ENCODE measurements at regions of chr11 and their contacts with region 1.

Region 1: DNA sequence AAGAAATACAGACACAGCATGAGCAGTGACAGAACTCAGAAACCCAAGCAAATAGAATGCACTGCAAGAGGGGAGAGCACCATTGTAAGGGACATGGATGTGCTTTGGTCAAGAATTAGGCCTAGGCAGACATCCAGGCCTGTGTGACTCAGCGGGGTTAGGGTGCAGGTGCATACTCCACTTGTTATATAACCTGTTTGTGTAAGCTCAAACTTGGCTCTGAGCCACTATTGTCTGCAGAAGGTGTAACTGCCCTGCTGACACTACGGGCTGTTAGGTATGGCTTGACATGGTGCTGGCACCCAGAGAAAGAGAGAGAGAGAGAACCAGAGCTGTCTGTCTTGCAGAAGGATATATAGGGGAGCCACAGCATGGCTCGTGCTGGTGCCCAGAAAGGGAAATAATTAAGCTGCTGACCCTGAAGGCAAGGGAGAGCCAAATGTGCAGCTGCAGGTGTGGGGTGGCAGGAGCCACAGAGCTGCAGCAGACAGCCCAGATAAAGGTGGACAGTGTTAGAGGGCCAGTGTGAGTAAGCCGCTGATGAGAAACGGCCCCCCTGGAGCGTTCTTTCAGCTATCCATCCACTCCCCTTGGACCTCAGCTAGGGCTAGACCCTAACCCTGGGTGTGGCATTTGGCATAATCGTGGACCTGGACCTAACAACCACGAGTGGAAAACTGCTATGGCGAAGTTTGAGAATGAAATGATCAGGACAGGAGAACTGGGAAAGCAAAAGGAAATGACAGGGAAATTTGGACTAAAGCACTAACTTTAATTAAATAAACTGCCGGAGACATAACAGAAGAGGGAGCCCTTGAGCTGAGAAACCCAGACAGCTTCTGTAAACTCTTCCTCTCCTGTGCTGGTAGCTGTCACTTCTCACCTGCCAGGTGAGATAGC is 253.0 kb upstream of the CCDC179 start:
- DNase-seq: peak; percentile 85
- ATAC-seq: peak; percentile 89
- H3K4me3 ChIP-seq: peak overlapping the region; percentile 51; the same call in 1 of the 2 replicates
- H3K27ac ChIP-seq: peak overlapping the region; percentile 34
- H3K4me1 ChIP-seq: peaks cover 13% of the 10 kb centered on the region; the same call in 1 of the 2 replicates
- H3K27me3 ChIP-seq: no peaks in the 10 kb centered on the region
- CTCF ChIP-seq: peak; percentile 77

Region 2: GRCh38 chr11:22920939-22921565 is 192.2 kb before region 1 on chr11:
- CTCF ChIA-PET with region 1: no interaction called
- POLR2A ChIA-PET with region 1: no interaction called
- intact Hi-C with region 1: loop called (anchors 5 kb)
- DNase-seq: peak; percentile 64
- ATAC-seq: peak; percentile 77
- H3K4me3 ChIP-seq: no peak overlapping the region
- H3K27ac ChIP-seq: no peak overlapping the region
- H3K4me1 ChIP-seq: no peaks in the 10 kb centered on the region
- H3K27me3 ChIP-seq: no peaks in the 10 kb centered on the region
- CTCF ChIP-seq: peak; percentile 76

Region 3: GRCh38 chr11:23288003-23288783 is 175.0 kb after region 1 on chr11:
- CTCF ChIA-PET with region 1: no interaction called
- POLR2A ChIA-PET with region 1: no interaction called
- intact Hi-C with region 1: loop called (anchors 1 kb)
- DNase-seq: peak; percentile 81
- ATAC-seq: peak; percentile 83
- H3K4me3 ChIP-seq: no peak overlapping the region
- H3K27ac ChIP-seq: peak overlapping the region; percentile 88
- H3K4me1 ChIP-seq: peaks cover 16% of the 10 kb centered on the region
- H3K27me3 ChIP-seq: no peaks in the 10 kb centered on the region
- CTCF ChIP-seq: no peak

Region 4: GRCh38 chr11:23540101-23540561 is 426.9 kb after region 1 on chr11:
- CTCF ChIA-PET with region 1: interaction called, 3 read pairs
- POLR2A ChIA-PET with region 1: no interaction called
- intact Hi-C with region 1: loop called (anchors 1 kb)
- DNase-seq: peak; percentile 79
- ATAC-seq: peak; percentile 86
- H3K4me3 ChIP-seq: peak overlapping the region; percentile 9; the same call in 1 of the 2 replicates
- H3K27ac ChIP-seq: no peak overlapping the region
- H3K4me1 ChIP-seq: peaks cover 13% of the 10 kb centered on the region
- H3K27me3 ChIP-seq: no peaks in the 10 kb centered on the region
- CTCF ChIP-seq: peak; percentile 67

Region 5: DNA sequence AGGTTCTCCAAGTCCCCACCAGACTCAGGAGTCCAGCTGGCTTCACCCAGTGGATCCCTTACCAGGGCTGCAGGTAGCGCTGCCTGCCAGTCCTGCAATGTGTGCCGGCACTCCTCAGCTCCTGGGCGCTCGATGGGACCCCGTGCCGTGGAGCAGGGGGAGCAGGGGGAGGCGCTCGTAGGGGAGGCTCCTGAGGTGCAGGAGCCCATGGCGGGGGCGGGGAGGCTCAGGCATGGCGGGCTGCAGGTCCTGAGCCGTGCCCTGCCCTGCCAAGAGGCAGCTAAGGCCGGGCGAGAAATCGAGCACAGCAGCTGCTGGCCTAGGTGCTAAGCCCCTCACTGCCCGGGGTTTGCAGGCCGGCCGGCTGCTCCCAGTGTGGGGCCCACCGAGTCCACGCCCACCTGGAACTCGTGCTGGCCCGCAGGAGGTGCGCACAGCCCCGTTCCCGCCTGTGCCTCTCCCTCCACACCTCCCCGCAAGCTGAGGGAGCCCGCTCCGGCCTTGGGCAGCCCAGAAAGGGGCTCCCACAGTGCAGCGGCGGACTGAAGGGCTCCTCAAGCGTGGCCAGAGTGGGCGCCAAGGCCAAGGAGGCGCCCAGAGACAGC is 539.9 kb after region 1 on chr11:
- CTCF ChIA-PET with region 1: no interaction called
- POLR2A ChIA-PET with region 1: no interaction called
- intact Hi-C with region 1: loop called (anchors 10 kb)
- DNase-seq: no peak
- ATAC-seq: no peak
- H3K4me3 ChIP-seq: no peak overlapping the region
- H3K27ac ChIP-seq: no peak overlapping the region
- H3K4me1 ChIP-seq: no peaks in the 10 kb centered on the region
- H3K27me3 ChIP-seq: no peaks in the 10 kb centered on the region
- CTCF ChIP-seq: no peak

Region 6: GRCh38 chr11:24324211-24324610 is 1211.0 kb after region 1 on chr11:
- CTCF ChIA-PET with region 1: no interaction called
- POLR2A ChIA-PET with region 1: no interaction called
- intact Hi-C with region 1: loop called (anchors 5 kb)
- DNase-seq: peak; percentile 40
- ATAC-seq: peak; percentile 68
- H3K4me3 ChIP-seq: no peak overlapping the region
- H3K27ac ChIP-seq: no peak overlapping the region
- H3K4me1 ChIP-seq: peaks cover 8% of the 10 kb centered on the region
- H3K27me3 ChIP-seq: no peaks in the 10 kb centered on the region
- CTCF ChIP-seq: no peak